PC-3 (cell line): ENCODE measurements at regions of chr19 and their contacts with region 1.

Region 1: GRCh38 chr19:10027158-10027693 is 13.9 kb downstream of the RDH8 start:
- DNase-seq: peak; percentile 76
- ATAC-seq: peak; percentile 61
- H3K4me3 ChIP-seq: peak overlapping the region; percentile 43; the same call in 1 of the 2 replicates
- H3K27ac ChIP-seq: peak overlapping the region; percentile 12; the same call in 1 of the 2 replicates
- H3K4me1 ChIP-seq: peaks cover 9% of the 10 kb centered on the region
- H3K27me3 ChIP-seq: peaks cover 20% of the 10 kb centered on the region
- CTCF ChIP-seq: no peak

Region 2: GRCh38 chr19:9709305-9709704 is 317.9 kb before region 1 on chr19:
- CTCF ChIA-PET with region 1: no interaction called
- POLR2A ChIA-PET with region 1: no interaction called
- intact Hi-C with region 1: no loop called
- DNase-seq: no peak
- ATAC-seq: no peak
- H3K4me3 ChIP-seq: no peak overlapping the region
- H3K27ac ChIP-seq: no peak overlapping the region
- H3K4me1 ChIP-seq: no peaks in the 10 kb centered on the region
- H3K27me3 ChIP-seq: no peaks in the 10 kb centered on the region
- CTCF ChIP-seq: no peak

Region 3: GRCh38 chr19:9934132-9934950 is 92.9 kb before region 1 on chr19:
- CTCF ChIA-PET with region 1: interaction called, 30 read pairs
- POLR2A ChIA-PET with region 1: no interaction called
- intact Hi-C with region 1: loop called (anchors 1 kb)
- DNase-seq: peak; percentile 89
- ATAC-seq: peak; percentile 59
- H3K4me3 ChIP-seq: no peak overlapping the region
- H3K27ac ChIP-seq: no peak overlapping the region
- H3K4me1 ChIP-seq: peaks cover 5% of the 10 kb centered on the region
- H3K27me3 ChIP-seq: peaks cover 14% of the 10 kb centered on the region
- CTCF ChIP-seq: peak; percentile 98